CD4-positive, alpha-beta memory T cell (primary cell): ENCODE measurements at regions of chr17 and their contacts with region 1.

Region 1: GRCh38 chr17:43338886-43339516 is 59.8 kb upstream of the ARL4D start:
- DNase-seq: peak; percentile 45 to 63 (median 53)
- H3K4me3 ChIP-seq: no peak overlapping the region
- H3K4me3 Mint-ChIP-seq: no peak overlapping the region
- H3K27ac ChIP-seq: no peak overlapping the region
- H3K27ac Mint-ChIP-seq: no peak overlapping the region
- H3K4me1 ChIP-seq: peaks cover 2% of the 10 kb centered on the region
- H3K4me1 Mint-ChIP-seq: peaks cover 2 to 16% (median 7%) of the 10 kb centered on the region in 4 donors
- H3K27me3 ChIP-seq: no peaks in the 10 kb centered on the region
- H3K27me3 Mint-ChIP-seq: peaks cover 0 to 5% of the 10 kb centered on the region in 2 donors

Region 2: DNA sequence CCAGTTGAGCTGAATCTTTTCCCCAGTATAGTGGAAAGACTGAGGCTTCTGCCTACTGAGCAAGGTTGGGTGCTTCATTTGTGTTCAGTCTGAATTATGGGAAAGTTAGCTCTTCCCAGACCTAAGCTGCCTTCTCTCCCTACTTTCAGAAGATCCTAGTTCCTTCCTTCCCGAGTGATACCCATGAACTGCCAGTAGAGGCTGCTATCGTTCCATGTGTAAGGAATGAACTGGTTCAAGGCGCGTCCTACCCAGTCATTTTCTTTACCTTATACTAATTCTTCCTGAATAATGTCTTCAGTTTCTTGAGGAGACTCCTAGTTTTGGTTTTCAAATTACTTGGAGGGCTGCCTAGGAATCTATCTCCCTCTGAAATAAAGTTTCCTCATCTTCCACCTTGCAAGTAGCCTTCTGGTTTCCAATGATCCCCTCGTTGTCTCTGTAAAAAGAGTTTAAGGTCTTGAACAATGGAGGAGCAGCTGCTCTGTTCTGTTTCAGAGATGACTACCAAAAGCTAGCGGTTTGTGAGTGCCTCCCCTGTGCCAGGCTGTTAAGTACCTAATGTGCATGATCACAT is 495.6 kb before region 1 on chr17:
- CTCF ChIA-PET with region 1: no interaction called
- POLR2A ChIA-PET with region 1: no interaction called
- intact Hi-C with region 1: loop called (anchors 2 kb)
- DNase-seq: peak in 2 of 5 donors; percentile 16 to 19
- H3K4me3 ChIP-seq: no peak overlapping the region
- H3K4me3 Mint-ChIP-seq: no peak overlapping the region
- H3K27ac ChIP-seq: no peak overlapping the region
- H3K27ac Mint-ChIP-seq: peak overlapping the region in 1 of 7 donors; percentile 58
- H3K4me1 ChIP-seq: no peaks in the 10 kb centered on the region
- H3K4me1 Mint-ChIP-seq: peaks cover 0 to 10% (median 6%) of the 10 kb centered on the region in 4 donors
- H3K27me3 ChIP-seq: no peaks in the 10 kb centered on the region
- H3K27me3 Mint-ChIP-seq: no peaks in the 10 kb centered on the region

Region 3: DNA sequence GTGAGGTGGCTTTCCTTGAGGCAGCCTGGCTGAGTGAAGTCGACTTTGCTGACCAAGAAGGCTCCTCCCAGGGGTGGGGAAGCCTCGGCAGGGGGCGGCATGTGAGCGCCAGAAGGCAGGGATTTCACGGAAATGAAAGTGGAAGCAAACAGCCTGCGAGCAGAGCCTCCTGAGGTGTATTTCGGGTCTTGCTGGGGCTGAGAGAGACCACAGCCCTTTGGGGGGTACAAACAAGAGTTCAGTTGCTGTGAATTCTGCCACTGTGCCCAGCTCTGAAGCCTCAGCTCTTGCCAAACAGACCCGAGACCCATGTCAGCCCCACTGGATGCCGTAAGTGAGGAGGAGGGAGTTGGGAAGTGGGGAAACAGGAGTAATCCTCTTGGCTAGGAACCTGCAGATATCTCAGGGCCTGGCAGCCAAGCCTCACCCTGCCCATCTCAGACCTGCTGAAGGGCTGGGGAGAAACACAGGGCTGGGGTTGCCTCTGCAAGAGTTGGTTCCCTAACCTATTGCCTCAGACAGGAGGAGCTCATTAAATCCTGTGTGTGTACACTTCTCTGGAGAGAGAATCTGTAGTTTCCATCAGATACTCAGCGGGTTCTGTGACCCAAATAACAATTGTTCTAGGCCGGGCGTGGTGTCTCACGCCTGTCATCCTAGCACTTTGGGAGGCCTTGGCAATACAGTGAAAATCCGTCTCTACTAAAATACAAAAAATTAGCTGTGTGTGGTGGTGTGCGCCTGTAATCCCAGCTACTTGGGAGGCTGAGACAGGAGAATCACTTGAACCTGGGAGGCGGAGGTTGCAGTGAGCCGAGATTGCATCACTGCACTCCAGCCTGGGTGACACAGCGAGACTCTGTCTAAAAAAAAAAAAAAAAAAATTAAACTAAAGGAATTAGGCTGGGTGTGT is 332.1 kb before region 1 on chr17 and contains the start of gene IFI35:
- CTCF ChIA-PET with region 1: interaction called, 15 read pairs
- POLR2A ChIA-PET with region 1: no interaction called
- intact Hi-C with region 1: loop called (anchors 1 kb)
- DNase-seq: peak; percentile 81 to 89 (median 83)
- H3K4me3 ChIP-seq: peak within 1 kb of the TSS; percentile 94 to 95
- H3K4me3 Mint-ChIP-seq: peak within 1 kb of the TSS; percentile 100
- H3K27ac ChIP-seq: peak within 1 kb of the TSS; percentile 90
- H3K27ac Mint-ChIP-seq: peak within 1 kb of the TSS; percentile 96 to 100 (median 99)
- H3K4me1 ChIP-seq: peaks cover 21% of the 10 kb centered on the region
- H3K4me1 Mint-ChIP-seq: peaks cover 8 to 26% (median 17%) of the 10 kb centered on the region in 4 donors
- H3K27me3 ChIP-seq: no peaks in the 10 kb centered on the region
- H3K27me3 Mint-ChIP-seq: no peaks in the 10 kb centered on the region
- total RNA-seq, gene IFI35: 33.1 to 40.3 TPM

Region 4: GRCh38 chr17:43352579-43353331 is 13.8 kb after region 1 on chr17:
- CTCF ChIA-PET with region 1: interaction called, 13 read pairs
- POLR2A ChIA-PET with region 1: no interaction called
- intact Hi-C with region 1: no loop called
- DNase-seq: no peak
- H3K4me3 ChIP-seq: no peak overlapping the region
- H3K4me3 Mint-ChIP-seq: no peak overlapping the region
- H3K27ac ChIP-seq: no peak overlapping the region
- H3K27ac Mint-ChIP-seq: no peak overlapping the region
- H3K4me1 ChIP-seq: no peaks in the 10 kb centered on the region
- H3K4me1 Mint-ChIP-seq: peaks cover 0 to 6% (median 3%) of the 10 kb centered on the region in 4 donors
- H3K27me3 ChIP-seq: no peaks in the 10 kb centered on the region
- H3K27me3 Mint-ChIP-seq: no peaks in the 10 kb centered on the region

Region 5: GRCh38 chr17:43645765-43646481 is 306.9 kb after region 1 on chr17:
- CTCF ChIA-PET with region 1: no interaction called
- POLR2A ChIA-PET with region 1: no interaction called
- intact Hi-C with region 1: no loop called
- DNase-seq: no peak
- H3K4me3 ChIP-seq: no peak overlapping the region
- H3K4me3 Mint-ChIP-seq: peak overlapping the region in 6 of 8 donors; percentile 44 to 76 (median 66)
- H3K27ac ChIP-seq: no peak overlapping the region
- H3K27ac Mint-ChIP-seq: peak overlapping the region in 1 of 7 donors; percentile 23
- H3K4me1 ChIP-seq: peaks cover 14% of the 10 kb centered on the region
- H3K4me1 Mint-ChIP-seq: peaks cover 3 to 27% (median 19%) of the 10 kb centered on the region in 4 donors
- H3K27me3 ChIP-seq: no peaks in the 10 kb centered on the region
- H3K27me3 Mint-ChIP-seq: peaks cover 2 to 9% of the 10 kb centered on the region in 2 donors